ENCODE measurements at regions of chr10 and their contacts with region 1.

Region 1: DNA sequence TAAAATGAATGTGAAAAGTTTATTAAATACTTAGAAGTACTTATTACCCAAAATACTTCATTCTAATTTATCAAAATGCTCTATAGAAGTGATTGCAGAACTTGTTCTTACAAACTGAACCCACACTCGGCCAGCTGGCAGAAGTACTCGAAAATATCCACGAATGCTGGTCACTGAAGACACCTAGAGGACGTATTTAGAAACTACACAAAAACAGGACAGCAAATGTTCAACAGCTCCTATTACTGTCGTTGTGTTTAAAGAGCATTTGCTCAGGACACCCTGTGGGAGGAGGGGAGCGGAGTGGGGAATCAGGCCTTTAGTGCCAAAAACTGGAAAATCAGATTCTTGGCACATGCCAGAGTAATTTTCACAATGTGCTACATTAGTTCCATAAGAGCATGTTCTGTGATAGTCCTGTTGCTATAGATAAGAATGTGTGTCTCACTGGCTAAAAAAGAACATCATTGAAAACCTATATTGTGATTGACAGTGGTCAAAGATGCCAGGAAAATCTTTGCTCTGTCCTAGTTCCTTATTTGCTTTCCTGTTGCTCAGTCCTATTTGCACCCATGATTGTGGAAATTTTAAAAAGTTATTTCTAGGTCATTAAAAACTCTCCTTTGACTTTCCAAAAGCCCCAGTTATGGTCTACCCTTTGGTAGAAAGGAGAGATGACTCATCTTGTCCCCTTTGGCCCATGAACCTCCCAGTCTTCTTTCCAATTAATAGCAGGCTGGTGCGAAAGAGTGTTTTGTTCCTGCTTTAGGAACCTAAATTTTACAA is 49.0 kb upstream of the NRBF2 start:
- DNase-seq: peak; percentile 90
- H3K4me3 ChIP-seq: no peak overlapping the region
- H3K27ac ChIP-seq: no peak overlapping the region
- H3K4me1 ChIP-seq: peaks cover 7% of the 10 kb centered on the region
- H3K27me3 ChIP-seq: no peaks in the 10 kb centered on the region
- CTCF ChIP-seq: peak; percentile 82

Region 2: DNA sequence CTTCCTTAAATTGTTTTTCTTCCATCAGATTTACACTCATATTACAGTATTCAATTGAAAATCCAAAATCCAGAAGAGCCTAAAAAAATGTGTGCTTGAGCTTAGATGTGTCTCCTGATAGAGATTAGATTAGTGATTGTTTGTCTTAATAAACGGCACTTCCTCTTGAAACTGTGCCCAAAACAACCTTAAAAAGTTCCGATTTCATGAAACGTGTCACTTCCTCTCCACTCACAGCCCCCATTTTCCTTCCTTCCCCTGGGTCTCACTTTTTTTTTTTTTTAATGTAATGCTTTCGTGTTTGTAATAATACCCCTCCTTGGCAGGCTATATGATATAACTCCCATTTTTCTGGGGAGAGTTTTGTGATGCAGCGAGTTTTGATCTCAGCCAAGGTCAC is 394.4 kb before region 1 on chr10:
- CTCF ChIA-PET with region 1: no interaction called
- POLR2A ChIA-PET with region 1: no interaction called
- intact Hi-C with region 1: loop called (anchors 5 kb)
- DNase-seq: peak; percentile 81
- H3K4me3 ChIP-seq: no peak overlapping the region
- H3K27ac ChIP-seq: peak overlapping the region; percentile 94
- H3K4me1 ChIP-seq: peaks cover 51% of the 10 kb centered on the region
- H3K27me3 ChIP-seq: no peaks in the 10 kb centered on the region
- CTCF ChIP-seq: no peak

Region 3: DNA sequence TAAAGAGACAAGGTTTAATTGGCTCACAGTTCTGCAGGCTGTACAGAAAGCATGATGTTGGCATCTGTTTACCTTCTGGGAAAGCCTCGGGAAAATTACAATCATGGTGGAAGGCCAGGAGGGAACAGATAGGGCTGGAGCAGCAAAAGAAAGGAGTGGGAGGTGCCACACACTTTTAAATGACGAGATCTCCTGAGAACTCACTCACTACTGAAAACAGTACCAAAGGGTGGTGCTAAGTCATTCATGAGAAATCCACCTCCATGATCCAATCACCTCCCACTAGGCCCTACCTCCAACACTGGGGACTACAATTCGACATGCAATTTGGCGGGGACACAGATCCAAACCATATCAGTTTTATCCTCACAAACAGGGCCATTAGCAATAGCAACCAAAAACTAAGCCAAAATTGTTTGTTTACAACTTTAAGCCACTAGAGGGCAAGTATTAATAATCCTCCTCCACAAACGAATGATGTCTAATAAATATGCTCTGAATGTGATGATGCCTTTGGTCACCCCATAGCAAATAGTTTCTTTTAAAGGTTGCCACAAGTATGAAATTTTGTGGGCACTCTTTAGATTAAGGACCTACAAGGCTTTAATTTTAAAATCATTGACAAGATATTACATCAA is 80.2 kb before region 1 on chr10:
- CTCF ChIA-PET with region 1: no interaction called
- POLR2A ChIA-PET with region 1: no interaction called
- intact Hi-C with region 1: loop called (anchors 2 kb)
- DNase-seq: peak; percentile 31
- H3K4me3 ChIP-seq: no peak overlapping the region
- H3K27ac ChIP-seq: no peak overlapping the region
- H3K4me1 ChIP-seq: peaks cover 8% of the 10 kb centered on the region
- H3K27me3 ChIP-seq: no peaks in the 10 kb centered on the region
- CTCF ChIP-seq: peak; percentile 49; the same call in 1 of the 2 replicates

Measured in A673 (cell line).